ENCODE measurements at regions of chr13 and their contacts with region 1.

Region 1: GRCh38 chr13:114053026-114053425 is 79.2 kb upstream of the C13orf46 start:
- DNase-seq: no peak
- H3K4me3 ChIP-seq: no peak overlapping the region
- H3K27ac ChIP-seq: no peak overlapping the region
- H3K4me1 ChIP-seq: no peaks in the 10 kb centered on the region
- H3K27me3 ChIP-seq: no peaks in the 10 kb centered on the region
- CTCF ChIP-seq: no peak

Region 2: GRCh38 chr13:114161644-114162532 is 108.9 kb after region 1 on chr13:
- dilution Hi-C with region 1: loop called (anchors 10 kb)
- DNase-seq: no peak
- H3K4me3 ChIP-seq: no peak overlapping the region
- H3K27ac ChIP-seq: no peak overlapping the region
- H3K4me1 ChIP-seq: no peaks in the 10 kb centered on the region
- H3K27me3 ChIP-seq: peaks cover 33% of the 10 kb centered on the region
- CTCF ChIP-seq: no peak